Right ventricle myocardium inferior (tissue), 1 donor: ENCODE measurements at regions of chr16 and their contacts with region 1.

Region 1: DNA sequence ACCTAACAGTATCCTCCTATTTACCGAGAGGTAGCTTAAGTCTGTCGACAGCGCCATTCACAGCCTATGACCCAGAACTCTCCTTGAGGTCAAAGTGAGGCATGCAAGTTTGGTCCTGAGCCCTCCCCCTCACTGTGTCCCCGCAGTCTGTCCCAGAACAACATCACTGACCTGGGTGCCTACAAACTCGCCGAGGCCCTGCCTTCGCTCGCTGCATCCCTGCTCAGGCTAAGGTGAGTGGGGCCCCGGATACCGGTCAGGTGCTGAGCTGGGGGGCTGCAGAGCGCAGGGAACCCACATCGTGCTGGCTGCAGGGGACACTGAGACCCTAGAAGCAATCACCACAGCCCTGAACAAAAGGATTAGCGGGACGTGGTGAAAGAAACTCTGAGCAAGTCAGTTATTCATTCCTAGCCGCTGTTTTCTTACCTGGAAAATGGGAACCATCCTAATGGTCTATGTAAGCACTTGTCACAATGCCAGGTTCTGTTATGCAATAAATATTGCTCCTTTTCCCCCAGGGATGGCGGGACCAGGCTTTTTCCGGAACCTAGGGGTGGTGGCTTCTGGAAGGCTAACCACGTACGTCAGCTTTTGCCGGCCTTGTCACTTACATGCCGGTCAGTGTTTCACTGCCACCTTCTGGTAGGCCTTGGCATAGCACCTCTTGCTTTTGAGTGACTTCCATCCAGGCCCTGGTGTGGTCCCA is 23.8 kb downstream of the DEXI start:
- DNase-seq: peak; percentile 94
- ATAC-seq: peak; percentile 81

Region 2: GRCh38 chr16:10529895-10530669 is 388.4 kb before region 1 on chr16:
- intact Hi-C with region 1: loop called (anchors 5 kb)
- DNase-seq: no peak
- ATAC-seq: peak; percentile 61

Region 3: DNA sequence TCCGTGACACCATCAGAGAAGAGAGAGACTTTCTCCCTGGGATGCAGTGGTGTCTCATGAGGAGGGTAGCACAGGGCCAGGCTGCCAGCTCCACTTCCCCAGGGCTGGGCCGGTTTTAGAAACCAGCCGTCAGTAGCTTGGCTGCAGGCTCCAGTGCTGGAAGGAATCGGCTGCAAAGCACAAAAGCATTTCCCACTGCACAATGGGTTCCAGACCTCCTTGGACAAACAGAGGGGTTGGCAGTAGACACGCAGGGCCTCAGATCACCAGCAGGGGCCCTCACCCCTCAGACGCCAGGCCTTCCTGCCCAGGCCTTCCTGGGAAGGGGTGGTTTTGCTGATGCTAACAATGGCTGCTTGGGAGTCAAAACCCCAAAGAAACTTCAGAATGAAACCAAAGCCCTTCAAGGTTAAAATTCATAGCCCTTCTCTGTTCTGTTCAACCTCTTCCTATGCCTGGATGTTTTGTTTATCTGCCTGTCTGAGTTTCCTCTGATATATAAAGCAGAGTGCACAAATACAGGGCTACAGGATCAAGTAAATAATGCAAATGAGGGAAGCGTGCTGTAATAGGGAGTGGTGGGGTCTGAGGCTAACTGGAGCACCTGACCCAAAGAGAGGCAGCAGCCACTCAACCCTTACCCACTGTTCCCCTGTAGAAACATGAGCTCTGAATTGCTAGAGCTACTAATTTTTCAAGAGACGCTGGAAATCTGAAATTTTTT is 250.0 kb before region 1 on chr16:
- intact Hi-C with region 1: loop called (anchors 5 kb)
- DNase-seq: no peak
- ATAC-seq: peak; percentile 38

Region 4: GRCh38 chr16:10743610-10744393 is 174.6 kb before region 1 on chr16 and contains the start of gene NUBP1:
- intact Hi-C with region 1: loop called (anchors 2 kb)
- DNase-seq: peak; percentile 99
- ATAC-seq: peak; percentile 97
- total RNA-seq, gene NUBP1: 50.4 TPM

Region 5: DNA sequence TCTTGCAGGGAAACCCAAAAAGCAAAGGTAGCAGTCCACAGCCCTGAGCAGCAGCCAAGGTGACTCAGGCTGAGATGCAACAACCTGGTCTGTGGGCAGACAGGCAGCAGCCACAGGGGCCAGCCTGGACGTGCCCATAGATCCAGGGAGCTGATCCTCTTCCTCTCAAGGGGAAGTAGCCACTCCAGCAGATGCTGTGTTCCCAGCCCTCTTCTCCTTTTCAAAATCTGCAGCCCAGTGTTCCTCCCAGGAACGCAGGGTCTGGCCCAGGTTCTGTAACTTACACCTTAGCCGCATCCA is 58.7 kb before region 1 on chr16:
- intact Hi-C with region 1: no loop called
- DNase-seq: no peak
- ATAC-seq: no peak

Region 6: DNA sequence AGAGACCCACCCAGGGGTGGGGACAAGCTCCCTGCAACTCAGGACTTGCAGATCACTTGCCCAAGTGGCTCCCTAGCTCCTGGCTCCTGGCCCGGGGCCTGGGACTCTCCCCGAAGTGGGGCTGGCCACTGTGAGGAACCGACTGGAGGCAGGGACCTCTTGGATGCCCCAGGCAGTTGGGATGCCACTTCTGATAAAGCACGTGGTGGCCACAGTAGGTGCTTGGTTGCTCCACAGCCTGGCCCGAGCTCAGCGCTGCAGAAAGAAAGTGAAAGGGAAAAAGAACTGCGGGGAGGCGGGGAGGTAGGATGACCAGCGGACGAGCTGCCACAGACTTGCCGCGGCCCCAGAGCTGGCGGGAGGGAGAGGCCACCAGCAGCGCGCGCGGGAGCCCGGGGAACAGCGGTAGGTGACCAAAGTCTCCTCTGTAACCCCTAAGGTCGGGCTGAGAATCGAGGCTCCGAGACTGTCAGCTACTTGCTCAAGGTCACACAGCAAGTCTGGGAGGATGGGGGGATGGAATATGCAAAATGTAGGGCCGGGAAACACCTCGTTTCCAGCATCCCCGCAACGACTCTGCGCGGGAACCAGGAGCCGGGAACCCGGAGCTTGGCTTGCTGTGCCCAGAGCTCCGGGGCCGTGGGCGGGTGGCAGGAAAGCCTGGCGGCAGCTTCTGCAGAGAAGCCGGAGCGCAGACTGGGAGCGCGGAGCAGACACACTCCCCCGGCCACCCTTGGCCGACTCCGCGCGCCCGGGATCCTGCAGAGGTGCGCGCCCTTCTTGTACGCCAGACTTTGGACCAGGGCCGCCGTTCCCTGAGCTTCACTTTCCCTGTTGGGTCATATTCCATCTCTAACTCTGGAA is 39.6 kb before region 1 on chr16:
- intact Hi-C with region 1: no loop called
- DNase-seq: peak; percentile 83
- ATAC-seq: peak; percentile 57

Region 7: GRCh38 chr16:10971560-10971961 is 53.1 kb after region 1 on chr16:
- intact Hi-C with region 1: no loop called
- DNase-seq: no peak
- ATAC-seq: peak; percentile 78